GM10248 (cell line): ENCODE measurements at regions of chr4 and their contacts with region 1.

Region 1: DNA sequence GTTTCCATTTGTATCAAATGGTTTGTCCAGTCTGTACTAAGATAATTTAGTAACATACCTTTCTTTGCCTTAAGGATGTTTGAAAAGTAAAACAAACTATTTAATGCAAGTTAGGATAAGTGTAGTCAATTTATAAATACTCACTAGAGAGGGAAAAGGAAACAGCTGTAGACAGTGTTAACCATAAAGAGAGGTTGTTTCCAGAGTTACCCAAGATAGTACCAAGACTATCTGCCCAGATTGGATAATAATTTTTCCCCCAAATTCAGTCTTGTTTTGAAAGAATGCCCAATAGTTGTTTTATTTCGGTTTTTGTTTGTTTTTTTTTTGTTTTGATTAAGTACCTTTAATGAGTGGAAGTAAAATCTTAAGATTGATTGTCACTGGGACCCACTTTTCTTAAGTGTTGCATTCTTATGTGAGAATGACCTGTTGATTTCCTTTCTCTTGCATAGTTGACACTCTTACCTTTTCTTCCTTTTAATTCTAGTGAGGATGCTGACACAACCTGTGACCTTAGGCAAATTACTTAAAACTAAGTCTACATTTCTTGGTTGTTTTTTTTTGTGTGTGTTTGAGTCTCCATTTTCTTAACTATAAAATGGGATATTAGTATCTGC is 12.8 kb downstream of the AFF1 start:
- DNase-seq: no peak
- CTCF ChIP-seq: no peak

Region 2: GRCh38 chr4:86934771-86935565 is 12.6 kb before region 1 on chr4 and contains the start of gene AFF1:
- CTCF ChIA-PET with region 1: interaction called, 43 read pairs
- POLR2A ChIA-PET with region 1: interaction called, 8 read pairs
- DNase-seq: peak; percentile 91
- CTCF ChIP-seq: peak; percentile 55